Naive thymus-derived CD4-positive, alpha-beta T cell (primary cell): ENCODE measurements at regions of chr3 and their contacts with region 1.

Region 1: DNA sequence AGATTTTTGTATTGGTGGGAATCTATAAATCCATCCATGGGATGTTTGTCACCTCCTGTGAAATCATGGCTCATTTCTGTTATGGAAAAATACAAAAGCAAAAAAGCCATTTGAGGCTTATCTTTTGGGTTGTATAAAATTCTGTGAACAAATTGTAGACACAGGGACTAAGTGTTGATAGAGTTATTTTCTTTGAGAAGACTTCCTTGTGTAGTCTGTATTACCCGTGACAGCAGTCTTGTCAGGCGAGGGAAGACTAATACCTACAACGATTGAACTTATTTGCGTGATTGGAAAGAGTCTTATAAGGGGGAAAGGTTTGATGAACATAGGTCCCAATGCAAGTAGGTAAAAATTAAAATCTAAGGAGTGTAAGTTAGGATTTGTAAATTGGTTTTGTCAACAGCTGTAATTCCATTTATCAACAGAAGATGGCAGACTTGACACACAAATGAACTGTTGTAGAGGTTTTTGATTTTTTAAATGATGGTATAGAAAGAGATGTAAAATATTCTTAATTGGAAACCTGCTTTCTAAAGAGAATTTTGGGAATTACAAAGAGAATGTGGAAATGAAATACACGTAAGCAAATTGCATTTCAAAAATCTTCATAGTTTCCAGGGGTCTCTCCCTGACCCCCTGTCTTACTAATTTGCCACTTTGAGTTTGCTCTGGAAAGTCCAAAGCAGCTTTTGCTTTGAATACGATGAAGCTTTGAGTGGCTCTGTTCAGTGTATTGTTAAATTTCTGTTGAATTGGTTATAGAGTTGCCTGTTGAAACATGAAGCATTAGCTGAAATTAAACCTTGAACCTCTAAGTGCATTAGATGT is 33.2 kb downstream of the SLC25A26 start:
- DNase-seq: peak in 5 of 9 donors; percentile 27 to 41 (median 35)
- ATAC-seq: peak; percentile 59
- H3K4me3 ChIP-seq: no peak overlapping the region
- H3K4me3 Mint-ChIP-seq: no peak overlapping the region
- H3K27ac ChIP-seq: no peak overlapping the region
- H3K27ac Mint-ChIP-seq: no peak overlapping the region
- H3K4me1 ChIP-seq: no peaks in the 10 kb centered on the region
- H3K4me1 Mint-ChIP-seq: peaks cover 3 to 13% (median 8%) of the 10 kb centered on the region in 7 donors
- H3K27me3 ChIP-seq: no peaks in the 10 kb centered on the region
- H3K27me3 Mint-ChIP-seq: no peaks in the 10 kb centered on the region

Region 2: GRCh38 chr3:65361448-65361847 is 892.6 kb before region 1 on chr3:
- CTCF ChIA-PET with region 1: no interaction called
- POLR2A ChIA-PET with region 1: no interaction called
- intact Hi-C with region 1: no loop called
- DNase-seq: no peak
- ATAC-seq: no peak
- H3K4me3 ChIP-seq: no peak overlapping the region
- H3K4me3 Mint-ChIP-seq: no peak overlapping the region
- H3K27ac ChIP-seq: no peak overlapping the region
- H3K27ac Mint-ChIP-seq: no peak overlapping the region
- H3K4me1 ChIP-seq: no peaks in the 10 kb centered on the region
- H3K4me1 Mint-ChIP-seq: peaks cover 0 to 3% (median 0%) of the 10 kb centered on the region in 7 donors
- H3K27me3 ChIP-seq: no peaks in the 10 kb centered on the region
- H3K27me3 Mint-ChIP-seq: peaks cover 11 to 28% (median 18%) of the 10 kb centered on the region in 5 donors

Region 3: GRCh38 chr3:65776494-65776893 is 477.5 kb before region 1 on chr3:
- CTCF ChIA-PET with region 1: no interaction called
- POLR2A ChIA-PET with region 1: no interaction called
- intact Hi-C with region 1: no loop called
- DNase-seq: no peak
- ATAC-seq: no peak
- H3K4me3 ChIP-seq: no peak overlapping the region
- H3K4me3 Mint-ChIP-seq: no peak overlapping the region
- H3K27ac ChIP-seq: no peak overlapping the region
- H3K27ac Mint-ChIP-seq: no peak overlapping the region
- H3K4me1 ChIP-seq: no peaks in the 10 kb centered on the region
- H3K4me1 Mint-ChIP-seq: no peaks in the 10 kb centered on the region
- H3K27me3 ChIP-seq: no peaks in the 10 kb centered on the region
- H3K27me3 Mint-ChIP-seq: peaks cover 0 to 4% (median 0%) of the 10 kb centered on the region in 5 donors

Region 4: DNA sequence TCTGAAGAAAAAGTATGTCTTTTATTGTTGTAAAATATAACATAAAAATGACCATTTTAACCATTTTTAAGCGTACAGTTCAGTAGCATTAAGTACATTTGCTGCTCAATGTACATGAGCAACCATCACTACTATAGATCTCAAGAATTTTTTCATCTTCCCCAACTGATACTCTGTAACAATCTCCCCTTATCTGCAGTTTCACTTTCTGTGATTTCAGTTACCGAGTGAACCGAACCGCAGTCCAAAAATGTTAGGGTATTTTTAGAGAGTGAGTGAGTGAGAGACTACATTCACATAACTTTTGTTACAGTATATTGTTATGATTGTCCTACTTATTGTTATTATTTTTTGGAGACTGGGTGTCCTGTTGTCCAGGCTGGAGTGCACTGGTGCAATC is 42.2 kb before region 1 on chr3:
- CTCF ChIA-PET with region 1: no interaction called
- POLR2A ChIA-PET with region 1: no interaction called
- intact Hi-C with region 1: no loop called
- DNase-seq: no peak
- ATAC-seq: no peak
- H3K4me3 ChIP-seq: no peak overlapping the region
- H3K4me3 Mint-ChIP-seq: no peak overlapping the region
- H3K27ac ChIP-seq: no peak overlapping the region
- H3K27ac Mint-ChIP-seq: no peak overlapping the region
- H3K4me1 ChIP-seq: no peaks in the 10 kb centered on the region
- H3K4me1 Mint-ChIP-seq: no peaks in the 10 kb centered on the region
- H3K27me3 ChIP-seq: no peaks in the 10 kb centered on the region
- H3K27me3 Mint-ChIP-seq: peaks cover 0 to 4% (median 2%) of the 10 kb centered on the region in 5 donors

Region 5: GRCh38 chr3:66312039-66312438 is 58.0 kb after region 1 on chr3:
- CTCF ChIA-PET with region 1: no interaction called
- POLR2A ChIA-PET with region 1: no interaction called
- intact Hi-C with region 1: no loop called
- DNase-seq: no peak
- ATAC-seq: peak; percentile 79
- H3K4me3 ChIP-seq: no peak overlapping the region
- H3K4me3 Mint-ChIP-seq: no peak overlapping the region
- H3K27ac ChIP-seq: no peak overlapping the region
- H3K27ac Mint-ChIP-seq: no peak overlapping the region
- H3K4me1 ChIP-seq: peaks cover 0 to 23% of the 10 kb centered on the region in 2 donors
- H3K4me1 Mint-ChIP-seq: peaks cover 8 to 46% (median 36%) of the 10 kb centered on the region in 7 donors
- H3K27me3 ChIP-seq: no peaks in the 10 kb centered on the region
- H3K27me3 Mint-ChIP-seq: no peaks in the 10 kb centered on the region

Region 6: GRCh38 chr3:66407611-66408218 is 153.7 kb after region 1 on chr3:
- CTCF ChIA-PET with region 1: interaction called, 14 read pairs
- POLR2A ChIA-PET with region 1: no interaction called
- intact Hi-C with region 1: loop called in 1 of 2 experiments (anchors 1 kb)
- DNase-seq: peak; percentile 45 to 79 (median 65)
- ATAC-seq: peak; percentile 89
- H3K4me3 ChIP-seq: no peak overlapping the region
- H3K4me3 Mint-ChIP-seq: no peak overlapping the region
- H3K27ac ChIP-seq: no peak overlapping the region
- H3K27ac Mint-ChIP-seq: no peak overlapping the region
- H3K4me1 ChIP-seq: no peaks in the 10 kb centered on the region
- H3K4me1 Mint-ChIP-seq: peaks cover 0 to 10% (median 0%) of the 10 kb centered on the region in 7 donors
- H3K27me3 ChIP-seq: no peaks in the 10 kb centered on the region
- H3K27me3 Mint-ChIP-seq: no peaks in the 10 kb centered on the region

Region 7: GRCh38 chr3:66816090-66816761 is 562.2 kb after region 1 on chr3:
- CTCF ChIA-PET with region 1: interaction called, 86 read pairs
- POLR2A ChIA-PET with region 1: no interaction called
- intact Hi-C with region 1: loop called (anchors 1 kb)
- DNase-seq: peak in 6 of 9 donors; percentile 39 to 64 (median 62)
- ATAC-seq: peak; percentile 85
- H3K4me3 ChIP-seq: no peak overlapping the region
- H3K4me3 Mint-ChIP-seq: no peak overlapping the region
- H3K27ac ChIP-seq: no peak overlapping the region
- H3K27ac Mint-ChIP-seq: no peak overlapping the region
- H3K4me1 ChIP-seq: no peaks in the 10 kb centered on the region
- H3K4me1 Mint-ChIP-seq: peaks cover 0 to 2% (median 0%) of the 10 kb centered on the region in 7 donors
- H3K27me3 ChIP-seq: no peaks in the 10 kb centered on the region
- H3K27me3 Mint-ChIP-seq: peaks cover 0 to 22% (median 3%) of the 10 kb centered on the region in 5 donors

Region 8: DNA sequence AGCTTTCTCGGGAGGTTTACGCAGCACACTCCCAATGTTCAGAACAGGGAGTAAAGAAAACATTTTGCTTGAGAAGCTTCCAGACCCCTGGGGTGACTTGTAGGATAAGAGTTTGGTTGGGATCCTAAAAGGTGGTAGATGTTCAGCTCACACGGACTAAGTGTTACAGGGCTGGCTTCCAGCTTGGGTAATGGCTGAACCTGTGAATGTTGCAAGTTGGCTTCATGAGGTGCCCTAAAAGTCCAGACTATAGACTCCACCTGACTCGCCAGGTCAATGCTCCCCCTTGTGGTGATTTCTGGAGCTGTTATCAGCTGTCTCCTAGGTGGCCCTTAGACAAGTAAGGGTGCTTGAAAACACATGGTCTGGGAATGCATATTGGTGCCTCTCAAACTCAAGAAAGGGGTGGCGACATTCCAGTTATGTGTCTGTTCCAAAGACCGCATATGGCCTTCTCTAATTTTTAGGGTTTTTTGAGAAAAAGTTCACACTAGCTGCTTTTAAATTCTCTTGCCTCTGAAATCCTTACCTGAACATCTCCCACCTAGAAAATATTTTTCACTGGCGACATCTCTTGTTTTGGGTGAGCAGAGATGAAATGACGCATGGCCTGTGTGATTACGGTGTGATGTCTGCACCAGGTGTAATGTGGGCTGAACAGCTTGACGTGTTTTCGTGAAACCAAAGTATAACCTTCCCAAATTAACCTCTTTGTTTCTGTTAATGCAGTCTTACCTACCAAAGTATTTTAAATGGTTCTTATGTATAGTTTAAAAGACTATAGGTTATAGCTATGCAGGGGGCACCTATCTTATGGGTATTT is 568.4 kb after region 1 on chr3:
- CTCF ChIA-PET with region 1: interaction called, 86 read pairs
- POLR2A ChIA-PET with region 1: no interaction called
- intact Hi-C with region 1: loop called (anchors 1 kb)
- DNase-seq: peak; percentile 27 to 66 (median 56)
- ATAC-seq: peak; percentile 85
- H3K4me3 ChIP-seq: no peak overlapping the region
- H3K4me3 Mint-ChIP-seq: no peak overlapping the region
- H3K27ac ChIP-seq: no peak overlapping the region
- H3K27ac Mint-ChIP-seq: no peak overlapping the region
- H3K4me1 ChIP-seq: no peaks in the 10 kb centered on the region
- H3K4me1 Mint-ChIP-seq: peaks cover 0 to 4% (median 0%) of the 10 kb centered on the region in 7 donors
- H3K27me3 ChIP-seq: no peaks in the 10 kb centered on the region
- H3K27me3 Mint-ChIP-seq: peaks cover 0 to 20% (median 3%) of the 10 kb centered on the region in 5 donors